ENCODE measurements at regions of chr11 and their contacts with region 1.

Region 1: GRCh38 chr11:128323381-128323780 is 264.0 kb downstream of the ETS1 start:
- DNase-seq: peak; percentile 52
- ATAC-seq: no peak
- H3K4me3 ChIP-seq: no peak overlapping the region
- H3K4me3 Mint-ChIP-seq: no peak overlapping the region
- H3K27ac ChIP-seq: no peak overlapping the region
- H3K27ac Mint-ChIP-seq: peak overlapping the region; percentile 66
- H3K4me1 ChIP-seq: peaks cover 32% of the 10 kb centered on the region in 2 donors
- H3K4me1 Mint-ChIP-seq: peaks cover 43% of the 10 kb centered on the region
- H3K27me3 ChIP-seq: no peaks in the 10 kb centered on the region
- H3K27me3 Mint-ChIP-seq: no peaks in the 10 kb centered on the region
- CTCF ChIP-seq: peak; percentile 34

Region 2: DNA sequence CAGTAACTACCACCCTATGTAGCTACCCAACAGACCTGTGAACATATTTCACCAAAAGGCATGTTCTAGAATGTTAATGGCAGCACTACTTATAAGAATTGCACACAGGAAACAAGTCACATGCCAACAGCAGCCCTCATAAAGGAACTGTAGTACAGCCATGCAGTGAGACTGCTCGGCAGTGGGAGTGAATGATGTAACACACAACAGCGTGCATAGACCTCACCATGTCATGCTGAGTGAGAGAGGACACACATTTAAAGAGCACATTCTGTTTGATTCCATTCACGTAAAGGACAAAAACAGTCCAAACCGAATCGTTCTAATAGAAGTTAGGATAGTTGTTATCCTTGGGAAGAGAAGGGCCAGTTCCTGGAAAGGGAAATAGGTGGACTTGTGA is 1295.6 kb before region 1 on chr11:
- CTCF ChIA-PET with region 1: no interaction called
- POLR2A ChIA-PET with region 1: no interaction called
- intact Hi-C with region 1: no loop called
- DNase-seq: no peak
- ATAC-seq: no peak
- H3K4me3 ChIP-seq: no peak overlapping the region
- H3K4me3 Mint-ChIP-seq: no peak overlapping the region
- H3K27ac ChIP-seq: no peak overlapping the region
- H3K27ac Mint-ChIP-seq: no peak overlapping the region
- H3K4me1 ChIP-seq: no peaks in the 10 kb centered on the region
- H3K4me1 Mint-ChIP-seq: no peaks in the 10 kb centered on the region
- H3K27me3 ChIP-seq: peaks cover 0 to 2% (median 0%) of the 10 kb centered on the region in 4 experiments
- H3K27me3 Mint-ChIP-seq: no peaks in the 10 kb centered on the region
- CTCF ChIP-seq: no peak

Region 3: DNA sequence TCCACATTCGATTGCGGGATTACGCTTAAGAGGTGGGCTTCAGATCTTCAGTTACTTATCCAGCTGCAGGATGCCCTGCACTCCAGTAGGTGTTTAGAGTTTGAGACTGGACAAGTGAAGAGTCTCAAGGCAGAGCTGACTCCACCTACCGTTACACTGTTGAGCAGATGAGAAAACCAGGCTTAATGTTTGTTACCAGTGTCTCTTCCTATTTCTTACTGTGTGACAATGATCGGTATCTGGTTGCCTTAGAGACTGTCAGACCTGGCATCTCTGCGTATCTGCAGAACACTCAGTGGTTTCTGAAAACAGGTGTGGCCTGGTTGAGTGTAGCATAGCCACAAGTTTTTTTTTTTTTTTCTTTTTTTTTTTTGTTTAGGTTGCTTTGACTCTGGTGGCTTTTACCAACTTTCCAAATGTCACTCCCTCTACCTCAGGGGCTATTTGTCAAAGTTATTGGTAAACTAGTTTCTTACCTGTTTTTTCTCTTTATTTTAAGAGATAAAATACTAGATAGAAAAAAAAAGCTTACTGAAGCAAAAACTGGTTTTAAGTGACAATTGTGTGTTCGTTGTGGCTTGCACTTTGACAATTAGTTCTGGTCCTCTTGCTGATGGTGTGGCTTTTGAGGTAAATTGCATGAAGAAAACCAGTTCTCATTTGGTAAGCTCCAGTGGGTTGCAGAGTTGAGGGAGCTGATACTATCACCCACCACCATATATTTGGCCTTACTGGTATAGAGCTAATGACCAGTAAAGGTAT is 20.8 kb before region 1 on chr11:
- CTCF ChIA-PET with region 1: interaction called, 8 read pairs
- POLR2A ChIA-PET with region 1: interaction called, 9 read pairs
- intact Hi-C with region 1: loop called (anchors 2 kb)
- DNase-seq: peak; percentile 82
- ATAC-seq: peak; percentile 90
- H3K4me3 ChIP-seq: no peak overlapping the region
- H3K4me3 Mint-ChIP-seq: peak overlapping the region; percentile 44
- H3K27ac ChIP-seq: peak overlapping the region; percentile 67 to 85
- H3K27ac Mint-ChIP-seq: peak overlapping the region; percentile 88
- H3K4me1 ChIP-seq: peaks cover 75 to 76% of the 10 kb centered on the region in 2 donors
- H3K4me1 Mint-ChIP-seq: peaks cover 77% of the 10 kb centered on the region
- H3K27me3 ChIP-seq: no peaks in the 10 kb centered on the region
- H3K27me3 Mint-ChIP-seq: no peaks in the 10 kb centered on the region
- CTCF ChIP-seq: no peak

Region 4: DNA sequence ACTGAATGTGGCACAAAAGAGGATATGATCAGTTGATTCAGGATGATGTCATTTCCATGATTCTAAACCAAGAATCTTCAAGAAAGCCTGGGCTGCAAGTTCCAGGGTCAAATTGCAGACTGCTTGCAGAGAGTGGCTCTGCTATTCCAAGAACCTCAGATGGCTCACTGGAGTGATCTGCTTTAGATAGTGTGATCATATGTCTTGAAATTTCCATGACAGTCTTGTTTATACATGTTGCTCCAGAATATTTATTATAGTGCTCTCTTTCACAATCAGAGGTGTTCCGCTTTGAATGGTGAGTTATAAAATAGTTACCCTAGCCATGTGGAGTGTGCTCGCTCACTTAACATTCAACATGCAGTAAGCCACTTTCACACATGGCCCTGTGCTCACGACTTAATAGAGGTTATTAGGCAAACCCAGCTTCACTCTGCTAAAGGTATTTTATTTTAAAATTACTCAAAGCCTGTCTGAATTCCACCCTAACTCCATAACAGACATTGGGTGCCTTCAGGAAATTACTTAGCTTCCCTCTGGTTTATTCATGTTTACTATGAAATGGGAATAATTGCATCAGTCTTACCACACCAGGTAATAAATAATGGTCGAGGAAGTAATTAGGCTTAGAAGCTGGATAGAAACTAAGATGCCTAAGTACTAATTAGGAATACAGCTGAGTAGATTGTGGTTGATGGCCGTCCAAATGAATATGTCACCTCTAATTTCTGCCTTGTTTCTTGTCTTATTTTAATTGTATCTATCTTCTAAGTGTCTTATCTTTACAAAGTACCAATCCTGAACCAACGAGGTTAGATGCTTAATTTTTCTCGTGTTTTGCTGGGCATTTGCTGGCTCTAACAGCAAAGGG is 76.1 kb after region 1 on chr11:
- CTCF ChIA-PET with region 1: interaction called, 4 read pairs
- POLR2A ChIA-PET with region 1: no interaction called
- intact Hi-C with region 1: loop called (anchors 5 kb)
- DNase-seq: no peak
- ATAC-seq: peak; percentile 80
- H3K4me3 ChIP-seq: no peak overlapping the region
- H3K4me3 Mint-ChIP-seq: no peak overlapping the region
- H3K27ac ChIP-seq: peak overlapping the region; percentile 61 to 76
- H3K27ac Mint-ChIP-seq: peak overlapping the region; percentile 43
- H3K4me1 ChIP-seq: peaks cover 25% of the 10 kb centered on the region in 2 donors
- H3K4me1 Mint-ChIP-seq: peaks cover 36% of the 10 kb centered on the region
- H3K27me3 ChIP-seq: no peaks in the 10 kb centered on the region
- H3K27me3 Mint-ChIP-seq: no peaks in the 10 kb centered on the region
- CTCF ChIP-seq: no peak

Measured in B cell (primary cell).